ENCODE measurements at regions of chr3 and their contacts with region 1.

Region 1: GRCh38 chr3:58271901-58272501 is 34.0 kb upstream of the RPP14 start:
- DNase-seq: no peak

Region 2: GRCh38 chr3:58287354-58287753 is 15.4 kb after region 1 on chr3:
- intact Hi-C with region 1: loop called in 1 of 2 experiments (anchors 2 kb)
- DNase-seq: no peak